Heart left ventricle (tissue), 16 donors: ENCODE measurements at regions of chr1 and their contacts with region 1.

Region 1: DNA sequence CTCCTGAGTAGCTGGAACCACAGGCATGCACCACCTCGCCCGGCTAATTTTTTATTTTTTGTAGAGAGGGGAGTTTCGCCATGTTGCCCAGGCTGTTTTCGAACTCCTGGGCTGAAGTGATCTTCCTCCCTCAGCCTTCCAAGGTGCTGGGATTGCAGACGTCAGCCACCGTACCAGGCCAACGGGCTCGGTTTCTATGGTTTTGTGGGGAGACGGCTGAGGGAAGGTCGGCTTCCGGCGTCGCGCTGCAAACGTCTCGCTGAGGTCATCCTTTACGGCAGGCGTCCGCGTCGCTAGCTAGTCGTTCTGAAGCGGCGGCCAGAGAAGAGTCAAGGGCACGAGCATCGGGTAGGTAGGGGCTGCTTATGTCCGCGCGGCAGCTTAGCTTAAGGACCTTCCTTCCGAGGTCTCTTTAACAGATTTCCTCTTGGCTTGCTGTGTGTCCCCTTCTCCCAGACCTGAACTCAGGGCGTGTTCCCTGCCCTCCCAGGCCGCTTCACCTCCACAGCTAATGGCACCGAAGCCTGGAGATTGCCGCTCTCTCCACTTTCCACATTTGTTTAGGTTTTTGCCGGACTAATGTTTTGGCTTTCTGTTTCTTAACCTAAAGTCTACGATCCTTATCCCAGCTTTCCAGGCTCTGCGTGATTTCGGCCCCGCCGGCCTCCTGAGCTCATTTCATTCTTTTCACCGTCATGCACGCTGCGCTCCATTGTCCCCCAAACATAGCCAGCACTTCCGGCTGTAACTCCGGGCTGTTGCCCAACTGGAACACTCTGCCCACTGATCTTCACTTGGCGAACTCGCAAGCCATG is at the start of gene NDUFS5:
- DNase-seq: peak; percentile 89 to 95 (median 93)
- ATAC-seq: peak; percentile 95 to 96 (median 96)
- H3K4me3 ChIP-seq: peak within 1 kb of the TSS; percentile 50 to 87 (median 80)
- H3K27ac ChIP-seq: peak within 1 kb of the TSS; percentile 82 to 99 (median 94)
- H3K4me1 ChIP-seq: peaks cover 0 to 25% (median 10%) of the 10 kb centered on the region in 12 donors
- H3K27me3 ChIP-seq: no peaks in the 10 kb centered on the region
- CTCF ChIP-seq: no peak
- POLR2A ChIP-seq: peak; percentile 79 to 89
- total RNA-seq, gene NDUFS5: 292 to 1,815 (median 503) TPM

Region 2: GRCh38 chr1:38990738-38991639 is 35.3 kb before region 1 on chr1 and contains the start of gene AKIRIN1:
- intact Hi-C with region 1: loop called in 5 of 10 experiments (anchors 1 to 5 kb)
- DNase-seq: peak; percentile 98 to 100 (median 99)
- ATAC-seq: peak; percentile 97 to 99 (median 98)
- H3K4me3 ChIP-seq: peak within 1 kb of the TSS; percentile 69 to 100 (median 96)
- H3K27ac ChIP-seq: peak within 1 kb of the TSS; percentile 81 to 99 (median 94)
- H3K4me1 ChIP-seq: peaks cover 0 to 44% (median 23%) of the 10 kb centered on the region in 12 donors
- H3K27me3 ChIP-seq: no peaks in the 10 kb centered on the region
- CTCF ChIP-seq: peak in 9 of 12 donors; percentile 8 to 66 (median 37)
- POLR2A ChIP-seq: peak; percentile 94 to 98
- total RNA-seq, gene AKIRIN1: 42.5 to 68.1 (median 59.1) TPM

Region 3: DNA sequence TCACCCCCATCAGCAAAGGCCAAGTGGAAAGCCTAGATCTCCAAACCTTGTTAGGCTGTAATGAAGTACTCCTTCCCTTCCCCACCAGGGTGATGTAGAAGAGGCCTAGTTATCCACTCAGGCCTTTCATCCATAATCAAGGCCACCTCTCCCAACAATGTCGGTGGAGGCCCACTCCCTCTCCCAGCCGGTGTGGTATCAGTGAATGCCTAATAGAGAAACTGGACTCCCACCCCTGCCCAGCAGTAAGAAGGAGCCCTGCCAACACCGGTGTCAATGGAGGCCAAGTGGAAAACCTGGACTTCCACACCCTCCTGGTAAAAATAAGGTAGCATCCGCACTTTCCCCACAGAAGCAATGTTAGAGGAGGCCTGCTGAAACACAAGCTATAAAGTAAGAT is 23.7 kb after region 1 on chr1:
- intact Hi-C with region 1: loop called in 1 of 10 experiments (anchors 1 kb)
- DNase-seq: no peak
- ATAC-seq: no peak
- H3K4me3 ChIP-seq: no peak overlapping the region
- H3K27ac ChIP-seq: no peak overlapping the region
- H3K4me1 ChIP-seq: peaks cover 0 to 19% (median 14%) of the 10 kb centered on the region in 12 donors
- H3K27me3 ChIP-seq: no peaks in the 10 kb centered on the region
- CTCF ChIP-seq: no peak
- POLR2A ChIP-seq: no peak

Region 4: GRCh38 chr1:39091845-39092645 is 65.8 kb after region 1 on chr1:
- intact Hi-C with region 1: loop called in 1 of 10 experiments (anchors 5 kb)
- DNase-seq: peak in 4 of 5 donors; percentile 66 to 82 (median 72)
- ATAC-seq: peak; percentile 44 to 79 (median 73)
- H3K4me3 ChIP-seq: no peak overlapping the region
- H3K27ac ChIP-seq: no peak overlapping the region
- H3K4me1 ChIP-seq: peaks cover 0 to 34% (median 6%) of the 10 kb centered on the region in 12 donors
- H3K27me3 ChIP-seq: no peaks in the 10 kb centered on the region
- CTCF ChIP-seq: peak; percentile 48 to 86 (median 66)
- POLR2A ChIP-seq: no peak